ENCODE measurements at regions of chr2 and their contacts with region 1.

Region 1: DNA sequence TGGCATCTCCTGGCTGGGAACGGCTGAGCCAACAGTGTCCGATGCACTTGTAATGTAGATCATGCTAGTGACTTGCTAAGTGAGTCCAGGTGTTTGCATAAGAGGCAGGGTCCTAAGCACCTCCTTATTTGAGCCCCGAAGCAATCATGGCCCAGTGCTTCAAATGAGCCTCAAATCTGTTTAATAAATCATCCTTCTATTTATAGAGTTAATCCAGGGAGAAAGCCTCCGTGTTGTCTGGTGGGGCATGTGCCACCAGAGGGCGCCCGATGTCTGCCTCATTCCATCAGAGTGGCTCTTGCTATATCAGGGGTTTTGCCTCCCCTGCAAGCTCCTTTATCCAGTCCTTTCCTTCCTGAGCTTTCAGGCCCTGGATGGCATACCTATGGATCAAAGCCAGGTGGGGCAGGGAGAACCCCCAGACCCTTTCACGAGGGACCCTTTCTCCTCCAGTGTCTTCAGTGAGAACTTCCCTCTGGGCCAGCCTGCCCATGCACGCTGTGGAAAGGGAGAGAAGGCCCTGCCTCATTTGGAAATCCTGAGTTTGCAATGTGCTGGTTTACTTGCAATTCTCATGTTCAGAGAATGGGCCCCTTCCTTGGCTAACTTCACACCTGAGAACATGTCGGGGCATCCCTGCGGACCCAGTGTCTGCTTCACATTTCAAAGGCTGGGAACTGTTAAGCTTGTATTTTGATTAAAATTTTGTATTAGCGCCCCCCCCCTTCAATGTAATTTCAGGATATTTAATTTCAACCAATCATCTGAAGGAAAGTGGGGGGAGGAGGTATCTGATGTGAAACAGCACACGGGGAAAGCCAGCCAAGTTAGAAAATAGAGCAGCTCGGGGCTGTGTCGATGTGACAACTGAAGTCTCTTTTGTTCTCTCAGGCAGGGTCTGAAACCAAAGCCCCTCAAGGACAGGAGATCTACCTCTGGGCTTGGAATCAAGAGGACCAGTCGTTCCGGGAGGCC is 39.7 kb downstream of the RDH14 start:
- DNase-seq: peak; percentile 58
- H3K4me3 ChIP-seq: no peak overlapping the region
- H3K27ac ChIP-seq: no peak overlapping the region
- H3K4me1 ChIP-seq: no peaks in the 10 kb centered on the region
- CTCF ChIP-seq: peak; percentile 89

Region 2: DNA sequence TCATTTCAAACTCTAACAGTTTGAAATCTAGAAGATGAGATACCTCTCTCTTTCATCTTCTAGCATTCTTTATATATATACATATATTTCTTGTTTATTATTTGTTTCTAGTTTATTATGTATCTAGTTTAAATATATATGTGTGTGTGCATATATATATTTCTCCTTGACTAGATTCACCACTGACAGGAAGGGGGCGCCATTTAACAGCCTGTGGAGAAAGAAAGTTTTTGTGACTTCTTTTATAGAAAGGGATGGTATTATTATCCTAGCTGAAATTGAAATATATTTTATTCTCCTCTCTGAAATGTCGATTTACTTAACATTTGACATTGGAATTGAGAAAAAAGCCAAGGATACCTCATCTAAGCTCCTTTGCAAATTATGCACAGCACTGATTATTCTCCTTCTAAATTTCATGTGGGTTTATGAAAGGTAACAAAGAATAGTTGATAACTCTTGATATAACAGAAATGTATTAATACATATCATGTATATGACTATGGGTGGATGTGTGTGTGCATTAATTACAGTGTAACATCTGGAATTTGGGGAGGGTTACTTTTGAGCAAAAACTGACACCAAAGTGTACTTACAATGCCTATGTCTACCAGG is 229.3 kb after region 1 on chr2:
- CTCF ChIA-PET with region 1: no interaction called
- POLR2A ChIA-PET with region 1: no interaction called
- intact Hi-C with region 1: loop called (anchors 2 kb)
- DNase-seq: peak; percentile 53
- H3K4me3 ChIP-seq: no peak overlapping the region
- H3K27ac ChIP-seq: no peak overlapping the region
- H3K4me1 ChIP-seq: no peaks in the 10 kb centered on the region
- CTCF ChIP-seq: peak; percentile 94

Region 3: DNA sequence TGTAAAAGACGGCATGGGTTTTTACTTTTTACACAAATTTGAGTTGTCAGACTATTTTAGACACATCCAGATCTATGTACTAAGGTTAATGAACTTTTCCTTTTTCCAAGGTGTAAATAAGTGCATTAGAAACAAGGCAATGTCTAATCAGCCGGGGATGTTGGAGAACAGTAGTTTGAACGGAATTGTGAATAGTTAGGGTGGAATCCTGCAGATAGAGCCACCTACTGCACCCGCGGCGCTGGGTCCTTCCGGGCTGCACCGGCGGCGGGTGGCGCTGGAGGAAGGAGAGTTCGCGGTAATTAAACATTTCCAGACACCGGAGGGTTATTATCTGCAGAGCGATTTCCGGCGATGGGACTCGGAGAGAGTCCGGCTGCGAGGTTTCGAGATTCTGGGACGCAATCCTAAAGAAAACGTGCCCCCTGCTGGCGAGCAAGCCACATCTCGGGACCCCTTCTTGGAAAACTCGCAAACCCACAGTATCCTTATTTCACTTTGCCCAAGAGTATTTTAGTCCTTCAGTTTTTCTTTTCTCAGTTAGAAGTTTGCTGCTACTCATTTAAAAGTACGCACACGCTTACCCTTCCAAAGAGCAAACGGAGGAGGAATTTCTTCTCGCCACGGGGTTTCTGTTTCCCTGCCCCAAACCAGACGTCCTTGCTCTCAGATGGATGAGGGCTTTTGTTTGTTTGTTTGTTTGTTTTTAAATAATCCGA is 842.2 kb after region 1 on chr2:
- CTCF ChIA-PET with region 1: no interaction called
- POLR2A ChIA-PET with region 1: no interaction called
- intact Hi-C with region 1: loop called (anchors 2 kb)
- DNase-seq: peak; percentile 67
- H3K4me3 ChIP-seq: peak overlapping the region; percentile 63
- H3K27ac ChIP-seq: no peak overlapping the region
- H3K4me1 ChIP-seq: no peaks in the 10 kb centered on the region
- CTCF ChIP-seq: peak; percentile 77

Measured in OCI-LY7 (cell line).